B cell (primary cell): ENCODE measurements at regions of chr4 and their contacts with region 1.

Region 1: DNA sequence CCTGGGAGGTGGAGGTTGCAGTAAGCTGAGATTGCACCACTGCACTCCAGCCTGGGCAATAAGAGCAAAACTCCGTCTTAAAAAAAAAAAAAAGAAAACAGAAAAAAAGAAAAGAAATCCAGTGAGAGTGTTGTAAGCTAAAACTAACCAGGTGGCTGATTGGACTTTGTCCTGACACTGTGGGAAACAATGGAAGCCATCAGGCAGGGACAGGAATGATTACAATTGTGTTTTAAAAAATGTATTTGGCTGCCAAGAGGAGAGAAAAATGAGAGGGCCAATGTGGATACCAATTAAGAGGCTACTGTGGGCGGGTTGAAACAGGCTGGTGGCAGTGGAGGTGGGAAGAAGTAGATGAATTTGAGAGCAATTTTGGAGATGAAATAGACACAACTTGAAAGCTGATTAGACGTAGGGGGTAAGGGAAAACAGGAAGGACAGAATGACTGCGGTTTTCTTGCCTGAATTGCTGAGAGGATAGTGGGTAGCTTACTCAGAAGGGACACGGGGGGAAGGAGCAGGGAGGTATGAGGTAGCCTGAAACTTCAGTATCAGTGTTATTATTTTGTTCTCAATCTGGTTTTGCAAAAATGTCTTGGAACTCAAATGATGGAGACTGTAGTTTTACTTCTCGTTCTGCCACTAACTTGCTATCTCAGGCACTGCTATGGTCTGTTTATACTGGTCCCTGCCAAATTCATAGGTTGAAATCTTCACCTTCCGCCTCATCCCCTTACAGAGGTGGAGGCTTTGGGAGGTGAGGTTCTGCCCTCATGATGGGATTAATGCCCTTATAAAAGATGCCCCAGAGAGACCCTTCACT is 45.6 kb upstream of the CHRNA9 start:
- DNase-seq: peak; percentile 61
- ATAC-seq: peak; percentile 58
- H3K4me3 ChIP-seq: peak overlapping the region in 3 of 5 experiments; percentile 6 to 27 (median 15)
- H3K4me3 Mint-ChIP-seq: peak overlapping the region; percentile 76
- H3K27ac ChIP-seq: peak overlapping the region; percentile 78 to 86
- H3K27ac Mint-ChIP-seq: peak overlapping the region; percentile 92
- H3K4me1 ChIP-seq: peaks cover 63 to 70% of the 10 kb centered on the region in 2 donors
- H3K4me1 Mint-ChIP-seq: peaks cover 68% of the 10 kb centered on the region
- H3K27me3 ChIP-seq: no peaks in the 10 kb centered on the region
- H3K27me3 Mint-ChIP-seq: no peaks in the 10 kb centered on the region
- CTCF ChIP-seq: no peak

Region 2: DNA sequence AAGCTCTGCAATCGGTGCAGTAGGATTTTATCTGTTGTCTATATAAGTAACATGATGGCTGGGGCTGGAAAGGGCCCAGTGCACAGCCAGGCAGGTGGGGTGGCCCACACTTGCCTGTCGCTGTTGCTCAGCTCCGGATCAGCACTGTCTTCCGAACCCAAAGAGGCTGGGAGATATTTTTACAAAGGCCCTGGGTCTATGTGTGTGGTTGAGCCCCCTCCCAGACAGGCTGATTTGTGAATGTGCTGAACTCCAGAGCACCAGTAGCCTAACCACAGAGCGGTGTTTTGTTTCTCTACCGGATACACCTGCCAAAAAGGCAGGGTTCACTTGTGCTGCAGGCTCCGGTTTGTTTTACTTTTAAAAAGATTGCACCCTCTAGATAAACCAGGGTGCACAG is 12.0 kb after region 1 on chr4:
- CTCF ChIA-PET with region 1: interaction called, 43 read pairs
- POLR2A ChIA-PET with region 1: interaction called, 6 read pairs
- intact Hi-C with region 1: loop called (anchors 1 kb)
- DNase-seq: peak; percentile 91
- ATAC-seq: peak; percentile 70
- H3K4me3 ChIP-seq: peak overlapping the region in 2 of 5 experiments; percentile 5 to 51
- H3K4me3 Mint-ChIP-seq: peak overlapping the region; percentile 72
- H3K27ac ChIP-seq: peak overlapping the region; percentile 86 to 90
- H3K27ac Mint-ChIP-seq: peak overlapping the region; percentile 96
- H3K4me1 ChIP-seq: peaks cover 91 to 98% of the 10 kb centered on the region in 2 donors
- H3K4me1 Mint-ChIP-seq: peaks cover 84% of the 10 kb centered on the region
- H3K27me3 ChIP-seq: no peaks in the 10 kb centered on the region
- H3K27me3 Mint-ChIP-seq: no peaks in the 10 kb centered on the region
- CTCF ChIP-seq: no peak

Region 3: GRCh38 chr4:40331101-40331824 is 41.7 kb after region 1 on chr4:
- CTCF ChIA-PET with region 1: no interaction called
- POLR2A ChIA-PET with region 1: no interaction called
- intact Hi-C with region 1: no loop called
- DNase-seq: no peak
- ATAC-seq: no peak
- H3K4me3 ChIP-seq: no peak overlapping the region
- H3K4me3 Mint-ChIP-seq: no peak overlapping the region
- H3K27ac ChIP-seq: no peak overlapping the region
- H3K27ac Mint-ChIP-seq: no peak overlapping the region
- H3K4me1 ChIP-seq: no peaks in the 10 kb centered on the region
- H3K4me1 Mint-ChIP-seq: no peaks in the 10 kb centered on the region
- H3K27me3 ChIP-seq: peaks cover 0 to 4% (median 2%) of the 10 kb centered on the region in 4 experiments
- H3K27me3 Mint-ChIP-seq: peaks cover 14% of the 10 kb centered on the region
- CTCF ChIP-seq: no peak